GM12878 (cell line): ENCODE measurements at regions of chr1 and their contacts with region 1.

Region 1: GRCh38 chr1:113835642-113836307 is 23.5 kb upstream of the RSBN1 start:
- DNase-seq: no peak
- ATAC-seq: peak; percentile 45; the same call in 2 of the 3 replicates
- H3K4me3 ChIP-seq: no peak overlapping the region
- H3K27ac ChIP-seq: no peak overlapping the region
- H3K4me1 ChIP-seq: no peaks in the 10 kb centered on the region
- H3K27me3 ChIP-seq: no peaks in the 10 kb centered on the region
- CTCF ChIP-seq: peak; percentile 9 to 51 (median 25); a peak in 4 of 6 replicates
- EP300 ChIP-seq: no peak
- POLR2A ChIP-seq: no peak
- RAD21 ChIP-seq: peak; percentile 69

Region 2: GRCh38 chr1:113734357-113735055 is 101.3 kb before region 1 on chr1:
- CTCF ChIA-PET with region 1: no interaction called
- POLR2A ChIA-PET with region 1: no interaction called
- RAD21 ChIA-PET with region 1: no interaction called
- SMC1A ChIA-PET with region 1: no interaction called
- in situ Hi-C with region 1: no loop called
- intact Hi-C with region 1: no loop called
- DNase-seq: no peak
- ATAC-seq: no peak
- H3K4me3 ChIP-seq: no peak overlapping the region
- H3K27ac ChIP-seq: no peak overlapping the region
- H3K4me1 ChIP-seq: no peaks in the 10 kb centered on the region
- H3K27me3 ChIP-seq: no peaks in the 10 kb centered on the region
- CTCF ChIP-seq: no peak
- EP300 ChIP-seq: no peak
- POLR2A ChIP-seq: no peak
- RAD21 ChIP-seq: no peak

Region 3: GRCh38 chr1:113859478-113860175 is 23.9 kb after region 1 on chr1:
- CTCF ChIA-PET with region 1: interaction called, 40 read pairs
- POLR2A ChIA-PET with region 1: interaction called, 9 read pairs
- RAD21 ChIA-PET with region 1: interaction called, 33 read pairs
- SMC1A ChIA-PET with region 1: interaction called, 30 read pairs
- in situ Hi-C with region 1: no loop called
- intact Hi-C with region 1: no loop called
- DNase-seq: peak; percentile 87
- ATAC-seq: peak; percentile 91
- H3K4me3 ChIP-seq: peak overlapping the region; percentile 51
- H3K27ac ChIP-seq: peak overlapping the region; percentile 84
- H3K4me1 ChIP-seq: peaks cover 50% of the 10 kb centered on the region
- H3K27me3 ChIP-seq: no peaks in the 10 kb centered on the region
- CTCF ChIP-seq: no peak; a peak in 1 of 6 replicates
- EP300 ChIP-seq: peak; percentile 30 to 91; a peak in 3 of 4 replicates
- POLR2A ChIP-seq: no peak
- RAD21 ChIP-seq: no peak

Region 4: GRCh38 chr1:113898241-113898814 is 62.6 kb after region 1 on chr1:
- CTCF ChIA-PET with region 1: interaction called, 74 read pairs
- POLR2A ChIA-PET with region 1: interaction called, 6 read pairs
- RAD21 ChIA-PET with region 1: interaction called, 46 read pairs
- SMC1A ChIA-PET with region 1: interaction called, 53 read pairs
- in situ Hi-C with region 1: loop called (anchors 5 kb)
- intact Hi-C with region 1: no loop called
- DNase-seq: no peak
- ATAC-seq: no peak; the same call in 2 of the 3 replicates
- H3K4me3 ChIP-seq: no peak overlapping the region
- H3K27ac ChIP-seq: no peak overlapping the region
- H3K4me1 ChIP-seq: no peaks in the 10 kb centered on the region
- H3K27me3 ChIP-seq: no peaks in the 10 kb centered on the region
- CTCF ChIP-seq: no peak
- EP300 ChIP-seq: no peak
- POLR2A ChIP-seq: no peak
- RAD21 ChIP-seq: no peak

Region 5: GRCh38 chr1:113949007-113949406 is 113.2 kb after region 1 on chr1:
- CTCF ChIA-PET with region 1: interaction called, 9 read pairs
- POLR2A ChIA-PET with region 1: no interaction called
- RAD21 ChIA-PET with region 1: interaction called, 7 read pairs
- SMC1A ChIA-PET with region 1: interaction called, 15 read pairs
- in situ Hi-C with region 1: no loop called
- intact Hi-C with region 1: no loop called
- DNase-seq: no peak
- ATAC-seq: no peak
- H3K4me3 ChIP-seq: no peak overlapping the region
- H3K27ac ChIP-seq: no peak overlapping the region
- H3K4me1 ChIP-seq: peaks cover 24% of the 10 kb centered on the region
- H3K27me3 ChIP-seq: no peaks in the 10 kb centered on the region
- CTCF ChIP-seq: 0 out of 6 replicates have a peak, but pooled peaks of 1 of the 3 experiments have one; percentile 10
- EP300 ChIP-seq: no peak
- POLR2A ChIP-seq: no peak
- RAD21 ChIP-seq: no peak

Region 6: GRCh38 chr1:114274621-114275317 is 439.0 kb after region 1 on chr1:
- CTCF ChIA-PET with region 1: no interaction called
- POLR2A ChIA-PET with region 1: no interaction called
- RAD21 ChIA-PET with region 1: no interaction called
- SMC1A ChIA-PET with region 1: no interaction called
- in situ Hi-C with region 1: loop called (anchors 10 kb)
- intact Hi-C with region 1: no loop called
- DNase-seq: no peak
- ATAC-seq: no peak
- H3K4me3 ChIP-seq: no peak overlapping the region
- H3K27ac ChIP-seq: no peak overlapping the region
- H3K4me1 ChIP-seq: no peaks in the 10 kb centered on the region
- H3K27me3 ChIP-seq: no peaks in the 10 kb centered on the region; a peak in 1 of 4 replicates
- CTCF ChIP-seq: no peak
- EP300 ChIP-seq: no peak
- POLR2A ChIP-seq: no peak
- RAD21 ChIP-seq: no peak